Mammary epithelial cell (primary cell): ENCODE measurements at regions of chr2 and their contacts with region 1.

Region 1: GRCh38 chr2:152352616-152353015 is 17.6 kb downstream of the FMNL2 start:
- DNase-seq: no peak
- H3K4me3 ChIP-seq: no peak overlapping the region
- H3K27ac ChIP-seq: no peak overlapping the region
- H3K4me1 ChIP-seq: peaks cover 8% of the 10 kb centered on the region
- H3K27me3 ChIP-seq: no peaks in the 10 kb centered on the region
- CTCF ChIP-seq: no peak

Region 2: DNA sequence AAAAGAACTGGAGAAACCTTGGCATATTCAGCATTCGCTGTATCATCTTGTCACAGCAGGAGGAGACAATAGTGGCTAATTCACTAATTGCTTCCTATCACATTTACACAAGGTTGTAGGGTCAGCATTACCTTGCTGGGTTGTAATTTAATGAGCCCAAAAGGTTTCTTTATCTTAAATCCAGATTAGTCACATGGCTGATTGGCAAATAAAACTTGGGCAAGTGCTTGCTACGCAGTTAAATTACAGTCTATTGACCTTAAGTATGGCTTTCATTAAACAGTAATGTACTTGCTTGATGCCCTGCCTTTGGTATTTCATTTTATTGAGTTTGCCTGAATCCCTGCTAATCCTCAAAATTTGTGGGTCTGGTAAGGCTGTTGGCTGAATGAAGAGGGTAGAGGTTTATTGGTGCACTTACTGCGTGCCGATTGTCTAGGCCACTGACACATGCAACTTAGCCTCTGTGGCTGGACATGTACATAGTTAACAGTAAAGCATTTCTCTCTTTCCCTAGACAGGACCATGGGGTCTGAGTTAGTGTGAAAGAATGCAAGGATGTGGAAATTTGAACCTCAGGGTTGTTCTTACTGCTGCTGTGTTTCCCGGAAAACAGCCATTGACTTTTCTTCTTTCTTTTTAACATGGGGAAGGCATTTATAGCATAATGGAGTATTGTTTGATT is 16.7 kb after region 1 on chr2:
- CTCF ChIA-PET with region 1: no interaction called
- dilution Hi-C with region 1: no loop called
- in situ Hi-C with region 1: no loop called
- intact Hi-C with region 1: loop called (anchors 1 kb)
- DNase-seq: peak; percentile 59
- H3K4me3 ChIP-seq: no peak overlapping the region
- H3K27ac ChIP-seq: no peak overlapping the region
- H3K4me1 ChIP-seq: peaks cover 12% of the 10 kb centered on the region
- H3K27me3 ChIP-seq: no peaks in the 10 kb centered on the region
- CTCF ChIP-seq: no peak

Region 3: GRCh38 chr2:152657043-152657442 is 304.4 kb after region 1 on chr2:
- CTCF ChIA-PET with region 1: no interaction called
- dilution Hi-C with region 1: no loop called
- in situ Hi-C with region 1: no loop called
- intact Hi-C with region 1: no loop called
- DNase-seq: peak; percentile 40
- H3K4me3 ChIP-seq: no peak overlapping the region
- H3K27ac ChIP-seq: no peak overlapping the region
- H3K4me1 ChIP-seq: no peaks in the 10 kb centered on the region
- H3K27me3 ChIP-seq: no peaks in the 10 kb centered on the region
- CTCF ChIP-seq: no peak